ENCODE measurements at regions of chr2 and their contacts with region 1.

Region 1: DNA sequence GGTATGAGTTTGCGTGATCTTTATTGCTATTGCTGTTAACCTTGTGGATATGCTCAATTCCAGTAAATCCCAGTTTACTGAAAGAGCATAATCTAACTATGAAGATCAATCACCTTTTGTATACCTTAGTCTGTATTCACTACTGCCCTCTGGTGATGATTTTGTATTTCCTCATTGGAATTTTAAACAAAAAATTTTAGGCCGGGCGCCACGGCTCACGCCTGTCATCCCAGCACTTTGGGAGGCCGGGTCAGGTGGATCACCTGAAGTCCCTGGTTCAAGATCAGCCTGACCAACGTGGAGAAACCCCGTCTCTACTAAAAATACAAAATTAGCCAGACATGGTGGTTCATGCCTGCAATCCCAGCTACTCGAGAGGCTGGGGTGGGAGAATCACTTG is 5.1 kb downstream of the COMMD1 start:
- DNase-seq: no peak
- ATAC-seq: no peak

Region 2: DNA sequence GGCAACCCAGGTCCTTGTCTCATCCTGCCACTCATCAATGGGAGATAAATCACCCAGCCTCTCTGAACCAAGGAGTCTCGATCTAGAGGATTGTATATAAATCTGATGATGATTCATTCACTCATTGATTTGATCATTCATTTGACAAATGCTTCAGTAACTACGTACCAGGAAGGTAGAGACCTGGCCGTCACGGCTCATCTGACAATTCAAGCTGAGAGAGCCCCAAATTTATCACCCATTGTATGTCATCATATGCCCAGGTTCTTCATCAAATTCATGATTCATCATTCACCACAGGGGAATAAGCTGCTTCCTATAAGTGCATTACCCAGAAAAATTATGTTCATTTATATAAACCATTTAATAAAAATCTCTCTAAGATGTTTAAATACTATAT is 173.7 kb before region 1 on chr2:
- intact Hi-C with region 1: no loop called
- DNase-seq: no peak
- ATAC-seq: no peak

Region 3: GRCh38 chr2:61970807-61971556 is 60.4 kb after region 1 on chr2:
- intact Hi-C with region 1: no loop called
- DNase-seq: no peak
- ATAC-seq: no peak

Region 4: DNA sequence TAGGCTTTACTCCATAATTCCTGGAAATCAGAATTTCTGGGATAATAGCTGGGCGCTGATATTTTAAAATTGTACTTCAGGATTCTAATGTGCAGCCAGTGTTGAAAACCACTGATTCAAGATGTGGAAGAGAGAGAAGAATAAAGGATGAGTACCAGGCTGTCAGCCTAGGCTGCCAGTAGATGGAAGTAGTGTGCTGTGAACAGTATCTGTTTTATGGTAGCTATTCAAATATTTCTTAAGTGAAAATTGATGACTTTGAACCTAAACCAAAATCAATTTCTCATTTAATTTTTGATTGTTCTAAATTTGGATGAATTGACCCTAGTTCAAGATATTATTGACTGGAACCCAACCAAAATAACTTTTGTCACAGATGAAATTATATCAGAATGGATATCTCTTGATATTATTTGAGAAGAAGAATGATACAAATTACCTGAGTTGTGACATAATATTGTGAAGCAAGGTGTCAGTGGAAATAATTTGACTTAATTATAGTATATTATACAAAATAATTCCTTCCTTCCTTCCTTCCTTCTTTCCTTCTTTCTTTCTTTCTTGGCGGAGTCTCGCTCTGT is 82.9 kb after region 1 on chr2:
- intact Hi-C with region 1: loop called (anchors 5 kb)
- DNase-seq: no peak
- ATAC-seq: peak; percentile 71

Region 5: DNA sequence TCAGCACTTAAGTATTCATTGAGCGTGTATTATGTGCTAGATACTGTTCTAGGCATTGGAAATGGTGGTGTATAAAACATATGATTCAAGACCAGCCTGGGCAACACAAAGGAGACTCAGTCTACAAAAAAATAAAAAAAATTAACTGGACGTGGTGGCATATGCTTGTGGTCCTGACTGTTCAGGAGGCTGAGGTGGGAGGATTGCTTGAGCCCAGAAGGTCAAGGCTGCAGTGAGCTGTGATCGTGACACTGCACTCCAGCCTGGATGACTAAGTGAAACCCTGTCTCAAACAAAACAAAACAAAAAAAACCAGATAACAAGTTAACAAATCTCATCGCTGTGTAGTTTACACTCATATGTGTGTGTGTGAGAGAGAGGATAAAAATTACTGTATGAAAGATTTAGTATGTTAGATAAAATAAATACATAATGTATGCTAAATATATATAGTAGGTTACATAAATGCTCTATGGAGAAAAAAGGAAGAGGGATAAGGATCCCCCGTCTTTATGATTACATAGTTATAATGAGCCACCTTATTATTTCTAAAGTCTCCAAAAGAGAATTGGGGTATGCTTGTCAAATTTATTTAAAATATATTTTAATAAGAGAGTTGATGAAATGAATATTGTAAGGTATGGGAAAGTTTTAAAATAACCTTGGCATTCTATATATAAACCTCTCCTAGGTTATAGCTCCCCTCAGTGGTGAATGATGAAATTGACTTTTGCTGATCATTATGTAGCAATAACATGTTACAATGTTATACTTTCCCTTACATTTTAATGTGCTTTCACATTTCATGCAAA is 864.2 kb after region 1 on chr2:
- intact Hi-C with region 1: loop called (anchors 10 kb)
- DNase-seq: no peak
- ATAC-seq: no peak

Measured in Right ventricle myocardium inferior (tissue), 1 donor.